Activated CD4-positive, alpha-beta T cell treated with anti-CD3 and anti-CD28 coated beads for 36 hours (primary cell): ENCODE measurements at regions of chr5 and their contacts with region 1.

Region 1: GRCh38 chr5:40834849-40835787 is at the start of gene RPL37:
- DNase-seq: peak; percentile 96
- ATAC-seq: peak; percentile 93
- H3K4me3 Mint-ChIP-seq: peak within 1 kb of the TSS; percentile 99
- H3K27ac Mint-ChIP-seq: peak within 1 kb of the TSS; percentile 100
- H3K4me1 Mint-ChIP-seq: peaks cover 44% of the 10 kb centered on the region
- H3K27me3 Mint-ChIP-seq: no peaks in the 10 kb centered on the region
- total RNA-seq, gene RPL37: 1,915 to 1,951 TPM

Region 2: GRCh38 chr5:39202597-39203274 is 1632.4 kb before region 1 on chr5:
- CTCF ChIA-PET with region 1: no interaction called
- POLR2A ChIA-PET with region 1: no interaction called
- intact Hi-C with region 1: loop called (anchors 5 to 10 kb)
- DNase-seq: peak; percentile 62
- ATAC-seq: peak; percentile 27
- H3K4me3 Mint-ChIP-seq: peak overlapping the region; percentile 81
- H3K27ac Mint-ChIP-seq: peak overlapping the region; percentile 93
- H3K4me1 Mint-ChIP-seq: peaks cover 36% of the 10 kb centered on the region
- H3K27me3 Mint-ChIP-seq: no peaks in the 10 kb centered on the region

Region 3: DNA sequence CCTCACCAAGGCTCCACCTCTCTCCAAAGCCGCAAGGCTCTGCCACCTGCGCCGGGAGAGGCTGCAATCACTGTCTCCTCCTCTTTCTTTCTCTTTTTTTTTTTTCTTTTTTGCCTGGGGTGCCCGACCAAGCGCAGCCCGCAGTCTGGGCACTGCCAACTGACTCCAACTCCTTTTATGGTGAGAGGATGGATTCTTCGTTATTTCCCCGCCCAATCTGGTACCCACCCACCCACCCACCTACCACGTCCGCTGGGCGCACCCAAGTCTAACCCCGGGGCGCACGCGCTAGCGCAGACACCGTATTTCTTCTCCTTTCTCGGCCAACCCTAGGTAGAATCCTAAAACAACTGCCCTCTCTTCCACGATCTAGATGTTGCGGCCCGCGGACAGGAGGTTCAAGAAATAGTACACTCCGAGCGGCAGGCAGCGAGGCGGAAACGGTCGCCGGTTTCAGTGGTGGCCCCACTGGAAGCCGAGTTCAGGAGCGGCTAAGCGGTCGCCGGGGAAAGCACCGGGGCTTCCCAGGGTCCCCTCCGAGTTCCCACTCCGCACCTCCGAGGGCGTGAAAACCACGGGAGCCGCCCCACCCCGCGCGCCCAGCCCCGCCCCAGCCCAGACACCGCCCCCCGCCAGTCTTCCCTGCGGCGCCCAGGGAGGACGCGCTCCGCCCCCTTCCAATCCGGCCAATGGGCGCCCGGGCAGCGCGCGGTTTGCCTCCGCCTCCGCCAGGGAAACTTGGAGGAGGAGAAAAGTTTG is 155.8 kb before region 1 on chr5:
- CTCF ChIA-PET with region 1: no interaction called
- POLR2A ChIA-PET with region 1: interaction called, 3 read pairs
- intact Hi-C with region 1: loop called (anchors 1 to 2 kb)
- DNase-seq: peak; percentile 97
- ATAC-seq: peak; percentile 59
- H3K4me3 Mint-ChIP-seq: peak overlapping the region; percentile 93
- H3K27ac Mint-ChIP-seq: peak overlapping the region; percentile 97
- H3K4me1 Mint-ChIP-seq: peaks cover 38% of the 10 kb centered on the region
- H3K27me3 Mint-ChIP-seq: no peaks in the 10 kb centered on the region

Region 4: GRCh38 chr5:40813698-40814281 is 21.3 kb before region 1 on chr5:
- CTCF ChIA-PET with region 1: interaction called, 4 read pairs
- POLR2A ChIA-PET with region 1: interaction called, 15 read pairs
- intact Hi-C with region 1: loop called (anchors 1 kb)
- DNase-seq: peak; percentile 77
- ATAC-seq: peak; percentile 97
- H3K4me3 Mint-ChIP-seq: no peak overlapping the region
- H3K27ac Mint-ChIP-seq: peak overlapping the region; percentile 26
- H3K4me1 Mint-ChIP-seq: peaks cover 10% of the 10 kb centered on the region
- H3K27me3 Mint-ChIP-seq: no peaks in the 10 kb centered on the region

Region 5: DNA sequence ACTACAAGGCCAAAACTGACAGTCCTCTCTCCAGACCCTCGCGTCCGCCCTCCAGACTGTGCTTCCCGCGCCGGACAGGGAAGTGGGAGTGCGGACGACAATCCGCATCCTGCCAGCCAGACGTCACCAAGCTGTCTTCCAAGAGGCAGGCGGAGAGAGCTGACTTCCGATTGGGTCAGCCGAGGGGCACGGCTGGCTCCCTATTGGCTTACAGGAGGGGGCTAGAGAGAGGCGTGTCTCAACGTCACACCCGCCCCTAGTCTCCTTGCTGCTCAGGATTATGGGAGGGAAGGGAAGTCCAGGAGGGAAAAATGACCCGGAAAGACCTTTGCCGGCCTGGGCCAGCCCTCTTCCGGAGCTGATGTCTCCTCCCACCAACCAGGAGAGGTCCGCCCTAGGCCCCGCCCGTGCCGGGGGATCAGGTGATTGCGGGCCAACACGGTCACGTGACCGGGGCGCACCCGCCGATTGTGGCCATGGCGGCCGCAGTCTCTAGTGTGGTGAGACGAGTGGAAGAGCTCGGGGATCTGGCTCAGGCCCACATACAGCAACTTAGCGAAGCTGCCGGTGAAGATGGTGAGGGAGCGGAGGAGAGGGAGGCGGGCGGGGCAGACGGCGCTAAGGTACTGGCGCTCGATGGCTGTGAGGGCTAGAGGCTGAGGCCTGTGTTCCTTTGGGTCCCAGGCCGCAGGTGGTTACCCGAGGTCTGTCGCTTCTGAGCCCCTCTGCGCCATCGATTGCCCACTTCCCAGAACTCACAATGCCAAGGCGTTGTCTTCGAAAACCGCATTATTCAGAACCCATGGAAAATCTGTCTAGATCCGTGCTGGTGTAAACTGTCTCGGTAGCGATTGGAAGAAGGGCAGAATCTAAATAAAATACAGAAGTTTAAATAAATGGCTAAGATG is 1069.0 kb after region 1 on chr5 and contains the start of gene RIMOC1:
- CTCF ChIA-PET with region 1: no interaction called
- POLR2A ChIA-PET with region 1: no interaction called
- intact Hi-C with region 1: loop called (anchors 1 kb)
- DNase-seq: peak; percentile 98
- ATAC-seq: peak; percentile 97
- H3K4me3 Mint-ChIP-seq: peak within 1 kb of the TSS; percentile 91
- H3K27ac Mint-ChIP-seq: peak within 1 kb of the TSS; percentile 98
- H3K4me1 Mint-ChIP-seq: peaks cover 47% of the 10 kb centered on the region
- H3K27me3 Mint-ChIP-seq: no peaks in the 10 kb centered on the region
- total RNA-seq, gene RIMOC1: 25.4 to 26.7 TPM